Astrocyte of the cerebellum (primary cell): ENCODE measurements at regions of chr1 and their contacts with region 1.

Region 1: DNA sequence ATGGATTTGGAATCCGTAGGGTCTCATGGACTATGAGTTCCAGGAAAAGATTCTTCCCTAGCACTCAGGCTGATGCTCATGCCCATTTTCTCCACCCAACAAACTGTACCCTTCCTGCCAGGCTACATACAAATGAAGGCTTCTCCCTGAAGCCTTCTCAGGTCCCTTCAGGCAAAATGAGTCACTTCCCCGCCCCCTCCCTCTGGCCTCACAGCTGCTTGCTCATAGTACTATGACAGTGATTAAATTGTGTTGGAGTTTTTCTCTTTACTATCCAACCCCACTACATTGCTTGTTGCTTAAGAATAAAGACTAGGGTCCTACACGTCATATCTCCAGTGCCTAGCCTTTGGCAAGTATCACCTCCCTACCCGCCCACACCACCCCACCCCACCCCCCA is 207.6 kb upstream of the NFIA start:
- DNase-seq: peak; percentile 5
- H3K4me3 ChIP-seq: no peak overlapping the region
- CTCF ChIP-seq: no peak

Region 2: GRCh38 chr1:59976194-59977074 is 898.3 kb before region 1 on chr1:
- in situ Hi-C with region 1: loop called (anchors 25 kb)
- DNase-seq: peak; percentile 38
- H3K4me3 ChIP-seq: no peak overlapping the region
- CTCF ChIP-seq: peak; percentile 85

Region 3: DNA sequence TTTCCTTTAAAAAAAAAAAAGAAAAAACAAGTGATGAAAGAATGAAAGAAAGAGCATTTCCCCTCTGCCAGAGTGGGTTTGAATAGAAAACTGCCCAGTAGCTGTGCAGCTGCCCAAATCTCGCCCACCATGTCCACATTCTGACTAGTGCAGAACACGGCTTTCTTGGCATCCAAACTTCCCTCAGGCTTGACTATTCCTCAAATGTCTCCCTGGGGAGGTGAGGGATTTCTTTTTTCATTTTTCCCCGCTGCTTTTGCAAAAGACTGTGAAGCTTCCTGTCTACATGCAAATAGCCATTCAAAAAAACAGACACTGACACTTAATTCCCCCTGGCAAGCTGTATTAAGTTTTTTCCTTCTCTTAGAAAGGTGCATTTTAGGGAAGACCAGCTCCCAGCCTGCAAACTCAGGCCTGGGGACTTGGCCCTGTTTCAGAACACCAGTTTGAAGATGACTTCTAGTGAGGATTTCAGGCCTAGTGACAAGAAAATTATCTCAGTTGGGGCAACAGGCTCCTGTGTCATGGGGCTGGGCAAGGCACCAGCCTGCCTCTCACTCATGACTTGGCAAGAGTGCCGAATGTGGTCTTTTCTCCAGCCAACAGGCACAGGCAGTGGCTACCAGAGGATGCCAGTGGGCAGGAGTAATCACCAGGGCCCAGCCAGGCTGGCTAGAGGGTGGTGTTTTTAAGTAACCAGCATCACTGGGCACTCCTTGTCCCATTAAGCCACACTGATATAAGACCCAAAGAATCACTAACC is 29.6 kb after region 1 on chr1:
- in situ Hi-C with region 1: no loop called
- DNase-seq: no peak
- H3K4me3 ChIP-seq: no peak overlapping the region
- CTCF ChIP-seq: no peak

Region 4: DNA sequence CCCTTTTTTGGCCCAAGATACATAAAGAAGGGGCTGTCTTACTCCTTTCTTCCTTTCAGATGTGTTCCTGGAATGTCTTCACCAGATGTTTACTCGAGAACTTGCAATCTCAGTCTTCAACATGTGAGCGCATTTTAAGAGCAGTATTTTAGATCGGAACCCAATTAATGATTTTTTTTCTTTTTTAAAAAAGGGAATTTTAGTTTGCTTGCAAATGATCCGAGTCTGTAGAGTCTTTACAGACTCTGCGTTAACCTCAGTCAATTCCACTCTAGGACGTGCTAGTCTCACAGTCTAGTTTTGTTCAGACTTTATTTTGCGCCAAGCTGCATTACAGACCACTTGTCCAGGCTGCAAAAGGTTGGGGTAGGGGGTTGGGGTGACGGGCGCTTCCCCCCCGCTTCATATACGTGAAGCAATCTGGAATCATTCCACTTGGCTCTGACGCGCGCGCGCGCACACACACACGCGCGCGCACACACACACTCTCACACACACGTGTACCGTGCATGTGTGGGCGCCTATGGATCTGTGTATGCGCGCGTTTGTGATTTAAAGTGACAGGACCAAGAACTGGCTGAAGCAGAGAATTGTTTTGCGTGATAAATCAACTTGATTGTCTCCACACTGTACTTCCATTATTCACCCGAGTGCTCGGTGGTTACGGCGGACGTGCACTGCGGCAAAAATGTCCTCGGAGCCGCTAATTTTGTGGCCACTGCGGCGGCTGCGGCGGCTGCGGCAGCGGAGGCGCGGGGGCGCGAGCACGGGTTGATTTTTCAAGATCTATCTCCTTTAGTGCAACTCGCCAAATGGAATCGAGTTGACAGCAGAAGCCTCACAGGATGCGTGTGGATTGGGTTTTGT is 182.1 kb after region 1 on chr1:
- in situ Hi-C with region 1: no loop called
- DNase-seq: no peak
- H3K4me3 ChIP-seq: peak overlapping the region; percentile 67
- CTCF ChIP-seq: no peak